Activated CD4-positive, alpha-beta T cell treated with anti-CD3 and anti-CD28 coated beads for 36 hours (primary cell): ENCODE measurements at regions of chr10 and their contacts with region 1.

Region 1: GRCh38 chr10:110547139-110547761 is 20.2 kb upstream of the SMC3 start:
- DNase-seq: no peak
- ATAC-seq: peak; percentile 84
- H3K4me3 Mint-ChIP-seq: no peak overlapping the region
- H3K27ac Mint-ChIP-seq: peak overlapping the region; percentile 56
- H3K4me1 Mint-ChIP-seq: peaks cover 8% of the 10 kb centered on the region
- H3K27me3 Mint-ChIP-seq: peaks cover 6% of the 10 kb centered on the region

Region 2: DNA sequence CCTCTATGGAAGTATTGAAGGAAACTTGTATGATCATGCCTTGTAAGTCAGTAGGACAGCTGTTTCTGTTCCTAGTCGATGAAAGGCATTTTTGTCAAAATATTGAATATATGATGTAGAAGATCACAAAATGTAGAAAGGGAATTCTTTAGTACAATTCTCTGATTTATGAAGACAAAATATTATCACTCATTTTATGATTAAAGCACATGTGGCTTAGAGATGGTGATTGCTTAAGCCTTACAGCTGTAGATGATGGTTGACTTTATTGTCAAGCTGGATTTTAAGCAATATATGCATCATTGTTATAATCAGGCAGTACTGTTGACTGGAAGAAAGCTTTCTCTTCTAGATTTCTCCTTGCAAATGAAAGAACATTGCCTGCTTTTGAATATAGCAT is 313.4 kb before region 1 on chr10:
- CTCF ChIA-PET with region 1: no interaction called
- POLR2A ChIA-PET with region 1: no interaction called
- intact Hi-C with region 1: no loop called
- DNase-seq: no peak
- ATAC-seq: no peak
- H3K4me3 Mint-ChIP-seq: no peak overlapping the region
- H3K27ac Mint-ChIP-seq: no peak overlapping the region
- H3K4me1 Mint-ChIP-seq: peaks cover 3% of the 10 kb centered on the region
- H3K27me3 Mint-ChIP-seq: no peaks in the 10 kb centered on the region

Region 3: GRCh38 chr10:110311357-110311949 is 235.8 kb before region 1 on chr10:
- CTCF ChIA-PET with region 1: interaction called, 79 read pairs
- POLR2A ChIA-PET with region 1: no interaction called
- intact Hi-C with region 1: loop called (anchors 1 kb)
- DNase-seq: peak; percentile 61
- ATAC-seq: peak; percentile 70
- H3K4me3 Mint-ChIP-seq: no peak overlapping the region
- H3K27ac Mint-ChIP-seq: no peak overlapping the region
- H3K4me1 Mint-ChIP-seq: peaks cover 27% of the 10 kb centered on the region
- H3K27me3 Mint-ChIP-seq: peaks cover 2% of the 10 kb centered on the region

Region 4: DNA sequence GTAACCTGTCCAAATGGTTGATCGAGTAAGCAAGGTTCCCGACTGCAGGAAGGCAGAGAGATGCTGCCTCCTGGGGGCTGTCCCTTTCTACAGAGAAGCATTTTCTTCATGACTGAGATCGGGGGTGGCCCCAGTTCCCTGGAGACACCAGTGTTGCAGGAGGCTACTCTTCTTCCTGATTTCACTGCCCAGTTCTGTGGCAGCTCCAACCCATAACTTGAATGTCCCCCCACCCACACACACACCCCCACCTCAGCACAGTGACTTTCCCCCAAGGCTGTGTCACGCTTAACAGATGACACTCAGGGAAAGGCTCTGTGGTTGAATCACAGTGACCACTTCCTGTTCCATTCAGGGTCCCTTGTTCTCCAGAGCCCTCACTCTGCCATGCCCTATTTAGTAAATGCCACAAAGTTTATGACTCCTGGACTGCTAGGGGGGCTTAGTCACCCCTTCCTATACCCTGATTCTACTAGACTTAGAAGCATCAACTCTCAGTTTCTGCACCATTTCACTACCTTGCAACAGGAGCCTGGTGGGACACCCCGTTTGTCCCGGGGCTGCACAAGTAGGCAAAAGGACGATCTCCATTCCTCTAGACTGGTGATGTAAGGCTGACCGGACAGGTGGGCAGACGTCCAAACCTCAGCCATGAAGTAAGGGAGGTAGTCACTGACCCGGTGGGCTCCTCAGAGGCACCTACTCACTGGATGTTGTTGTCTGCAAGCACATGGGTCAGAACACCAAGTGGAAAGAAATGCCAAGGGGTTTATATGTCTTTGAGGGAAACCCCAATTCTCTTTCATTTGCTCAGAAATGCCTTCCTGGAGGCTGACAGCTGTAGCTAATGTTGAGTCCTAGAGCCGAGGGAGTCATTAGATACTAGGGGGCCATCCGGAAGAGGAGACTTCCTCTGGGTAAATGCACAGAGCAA is 11.0 kb before region 1 on chr10:
- CTCF ChIA-PET with region 1: interaction called, 13 read pairs
- POLR2A ChIA-PET with region 1: no interaction called
- intact Hi-C with region 1: no loop called
- DNase-seq: peak; percentile 87
- ATAC-seq: peak; percentile 93
- H3K4me3 Mint-ChIP-seq: peak overlapping the region; percentile 15
- H3K27ac Mint-ChIP-seq: peak overlapping the region; percentile 79
- H3K4me1 Mint-ChIP-seq: peaks cover 37% of the 10 kb centered on the region
- H3K27me3 Mint-ChIP-seq: peaks cover 3% of the 10 kb centered on the region